ENCODE measurements at regions of chr13 and their contacts with region 1.

Region 1: DNA sequence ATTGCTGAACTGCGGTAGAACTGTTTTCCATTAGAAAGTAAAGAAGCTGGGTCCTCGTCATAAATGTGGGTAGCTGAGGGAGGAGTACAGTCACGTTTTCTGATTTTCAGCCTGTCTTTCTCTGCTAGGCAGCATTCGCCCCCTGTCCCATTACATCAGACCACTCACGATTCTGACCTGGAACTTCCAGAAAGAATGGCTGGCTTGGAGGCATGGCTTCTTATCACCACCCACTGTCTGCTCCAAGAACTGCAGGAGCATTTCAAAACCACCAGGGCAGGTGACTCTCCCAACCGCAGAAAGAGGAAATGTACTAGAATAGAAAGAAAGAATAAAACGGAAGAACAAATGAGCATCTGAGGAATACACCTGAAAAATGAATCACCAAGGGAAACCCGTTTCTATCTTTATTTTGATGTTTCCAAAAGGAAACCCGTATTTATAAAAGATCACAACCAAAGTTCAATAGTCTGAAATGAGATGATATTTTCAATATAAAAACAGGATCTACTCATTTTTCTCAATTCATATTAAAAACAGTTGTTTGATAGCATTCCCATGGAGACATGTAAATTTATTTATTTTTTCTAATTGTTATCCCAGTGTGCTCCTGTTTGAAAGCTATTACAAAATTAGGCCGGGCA is 22.1 kb upstream of the POMP start:
- DNase-seq: peak; percentile 62 to 65
- H3K4me3 ChIP-seq: no peak overlapping the region
- H3K27ac ChIP-seq: no peak overlapping the region
- H3K4me1 ChIP-seq: peaks cover 19 to 32% of the 10 kb centered on the region in 2 donors
- H3K27me3 ChIP-seq: no peaks in the 10 kb centered on the region
- CTCF ChIP-seq: peak; percentile 58 to 95 (median 88)
- POLR2A ChIP-seq: no peak

Region 2: DNA sequence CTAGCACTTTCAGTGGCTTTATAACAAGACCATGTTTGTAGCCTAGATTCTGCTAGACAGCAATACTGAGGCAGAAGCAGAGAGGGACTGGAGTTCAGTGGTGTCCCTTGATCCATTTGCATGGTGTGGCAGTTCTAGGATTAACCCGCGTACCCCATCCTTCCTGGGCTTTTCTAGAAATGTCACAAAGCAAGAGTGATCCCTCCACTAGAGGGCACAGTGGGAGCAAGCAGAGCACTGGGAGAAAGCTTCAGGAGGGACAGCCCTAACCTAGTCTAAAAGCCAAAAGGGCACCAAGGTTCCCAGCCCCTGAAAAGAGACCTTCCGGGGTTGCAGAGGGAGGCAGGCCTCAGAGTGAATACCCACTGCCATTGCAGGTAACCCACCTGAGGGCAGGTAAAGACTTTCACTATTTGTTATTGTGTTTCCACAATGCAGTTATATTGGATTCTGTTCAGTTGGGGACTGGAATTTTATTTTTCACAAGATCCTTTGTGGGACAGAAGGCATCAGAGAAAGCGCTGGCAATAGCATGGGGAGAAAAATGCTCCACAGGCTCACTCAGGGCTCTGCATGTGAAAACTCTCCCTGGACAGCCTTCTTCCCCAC is 312.5 kb before region 1 on chr13:
- intact Hi-C with region 1: loop called (anchors 10 kb)
- DNase-seq: peak; percentile 58 to 59
- H3K4me3 ChIP-seq: no peak overlapping the region
- H3K27ac ChIP-seq: no peak overlapping the region
- H3K4me1 ChIP-seq: peaks cover 0 to 4% of the 10 kb centered on the region in 2 donors
- H3K27me3 ChIP-seq: no peaks in the 10 kb centered on the region
- CTCF ChIP-seq: peak; percentile 21 to 76 (median 64)
- POLR2A ChIP-seq: no peak

Region 3: GRCh38 chr13:28531077-28531844 is 105.5 kb before region 1 on chr13:
- intact Hi-C with region 1: loop called (anchors 5 kb)
- DNase-seq: peak; percentile 13 to 36
- H3K4me3 ChIP-seq: peak overlapping the region in 1 of 3 donors; percentile 58
- H3K27ac ChIP-seq: peak overlapping the region in 1 of 3 donors; percentile 85
- H3K4me1 ChIP-seq: peaks cover 7 to 10% of the 10 kb centered on the region in 2 donors
- H3K27me3 ChIP-seq: no peaks in the 10 kb centered on the region
- CTCF ChIP-seq: no peak
- POLR2A ChIP-seq: no peak

Region 4: DNA sequence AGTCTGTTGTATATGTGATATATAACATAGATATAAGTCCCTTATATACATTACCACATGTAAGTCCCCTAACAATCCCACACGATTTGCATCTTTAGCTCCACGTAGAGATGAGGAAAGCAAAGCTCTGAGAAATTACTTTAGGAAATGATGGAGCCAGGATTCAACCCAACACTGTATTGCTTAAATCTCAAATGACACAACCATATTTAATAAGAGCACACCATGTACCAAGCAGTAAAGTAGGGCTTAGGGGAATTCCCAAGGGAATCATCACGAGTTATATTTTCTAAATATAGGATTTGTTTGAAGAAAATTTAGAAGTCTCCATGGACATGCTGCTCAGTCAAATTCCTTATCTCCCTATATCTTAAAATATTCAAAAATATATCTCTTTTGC is 39.2 kb before region 1 on chr13:
- intact Hi-C with region 1: no loop called
- DNase-seq: no peak
- H3K4me3 ChIP-seq: no peak overlapping the region
- H3K27ac ChIP-seq: no peak overlapping the region
- H3K4me1 ChIP-seq: peaks cover 0 to 4% of the 10 kb centered on the region in 2 donors
- H3K27me3 ChIP-seq: no peaks in the 10 kb centered on the region
- CTCF ChIP-seq: no peak
- POLR2A ChIP-seq: no peak

Region 5: DNA sequence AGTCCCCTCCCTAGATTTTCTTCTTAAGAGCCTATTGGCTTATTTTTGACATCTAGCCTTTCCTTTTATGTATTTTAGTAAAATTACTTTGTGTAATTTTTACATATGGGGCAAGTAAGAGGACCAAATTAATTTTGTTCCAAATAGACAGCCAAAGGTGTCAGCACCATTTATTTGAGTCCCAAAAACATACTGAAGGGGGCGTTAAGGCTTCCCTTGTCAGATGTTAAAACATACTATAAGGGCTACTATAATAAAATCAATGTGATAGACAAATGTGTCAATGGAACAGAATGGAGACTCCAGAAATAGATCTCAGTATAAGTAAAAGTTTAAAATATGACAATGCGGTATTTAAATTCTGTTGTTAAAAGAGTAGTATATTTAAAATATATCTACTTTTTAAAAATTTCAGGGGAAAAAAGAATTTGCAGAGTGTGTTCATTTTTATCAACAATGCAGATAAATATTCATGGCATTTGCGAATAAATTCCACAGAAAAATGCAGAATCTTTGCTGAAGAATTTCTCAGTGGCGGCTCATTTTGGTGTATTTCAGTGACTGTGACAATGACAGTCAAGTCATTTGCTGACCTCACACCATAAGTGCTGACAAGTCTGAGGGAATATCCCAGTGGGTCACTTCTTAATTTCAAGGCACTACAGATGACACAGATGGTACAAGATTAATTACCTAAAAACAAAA is 317.1 kb after region 1 on chr13:
- intact Hi-C with region 1: no loop called
- DNase-seq: no peak
- H3K4me3 ChIP-seq: no peak overlapping the region
- H3K27ac ChIP-seq: no peak overlapping the region
- H3K4me1 ChIP-seq: no peaks in the 10 kb centered on the region
- H3K27me3 ChIP-seq: no peaks in the 10 kb centered on the region
- CTCF ChIP-seq: no peak
- POLR2A ChIP-seq: no peak

Region 6: GRCh38 chr13:29005763-29006120 is 368.9 kb after region 1 on chr13:
- intact Hi-C with region 1: no loop called
- DNase-seq: no peak
- H3K4me3 ChIP-seq: no peak overlapping the region
- H3K27ac ChIP-seq: no peak overlapping the region
- H3K4me1 ChIP-seq: no peaks in the 10 kb centered on the region
- H3K27me3 ChIP-seq: no peaks in the 10 kb centered on the region
- CTCF ChIP-seq: no peak
- POLR2A ChIP-seq: no peak

Region 7: DNA sequence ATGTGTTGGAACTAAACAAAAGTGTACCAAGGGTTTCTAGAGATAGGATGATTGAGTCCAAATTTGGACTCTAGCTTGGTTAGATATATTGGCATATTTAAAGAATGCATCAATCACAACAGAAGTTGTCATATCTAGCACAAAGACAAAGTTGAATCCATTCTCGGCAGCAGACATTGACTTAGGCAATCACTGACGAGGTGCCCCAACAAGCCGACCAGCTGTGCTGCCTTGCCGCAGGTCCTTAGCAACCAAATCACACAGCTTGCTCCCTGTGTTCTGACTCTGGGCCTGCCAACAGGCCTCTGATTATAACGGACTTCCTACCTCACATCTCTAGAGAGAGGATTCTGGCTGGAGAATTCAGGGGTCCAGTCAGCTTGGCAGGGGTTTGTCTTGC is 392.1 kb after region 1 on chr13:
- intact Hi-C with region 1: no loop called
- DNase-seq: no peak
- H3K4me3 ChIP-seq: no peak overlapping the region
- H3K27ac ChIP-seq: no peak overlapping the region
- H3K4me1 ChIP-seq: no peaks in the 10 kb centered on the region
- H3K27me3 ChIP-seq: no peaks in the 10 kb centered on the region
- CTCF ChIP-seq: no peak
- POLR2A ChIP-seq: no peak